ENCODE measurements at regions of chr13 and their contacts with region 1.

Region 1: GRCh38 chr13:41411522-41411921 is 45.8 kb upstream of the RGCC start:
- DNase-seq: peak; percentile 45
- H3K4me3 ChIP-seq: no peak overlapping the region
- H3K27ac ChIP-seq: no peak overlapping the region
- H3K4me1 ChIP-seq: no peaks in the 10 kb centered on the region
- H3K27me3 ChIP-seq: no peaks in the 10 kb centered on the region
- CTCF ChIP-seq: peak in 1 of 3 experiments; percentile 8
- POLR2A ChIP-seq: no peak

Region 2: GRCh38 chr13:41652727-41653361 is 241.3 kb after region 1 on chr13:
- intact Hi-C with region 1: loop called (anchors 10 kb)
- DNase-seq: peak; percentile 32
- H3K4me3 ChIP-seq: no peak overlapping the region
- H3K27ac ChIP-seq: no peak overlapping the region
- H3K4me1 ChIP-seq: no peaks in the 10 kb centered on the region
- H3K27me3 ChIP-seq: no peaks in the 10 kb centered on the region
- CTCF ChIP-seq: peak; percentile 53 to 57 (median 54)
- POLR2A ChIP-seq: no peak